Naive thymus-derived CD4-positive, alpha-beta T cell (primary cell): ENCODE measurements at regions of chr4 and their contacts with region 1.

Region 1: GRCh38 chr4:83083925-83084475 is 30.5 kb downstream of the PLAC8 start:
- DNase-seq: peak; percentile 36 to 86 (median 77)
- ATAC-seq: peak; percentile 98
- H3K4me3 ChIP-seq: no peak overlapping the region
- H3K4me3 Mint-ChIP-seq: peak overlapping the region; percentile 43 to 74 (median 62)
- H3K27ac ChIP-seq: peak overlapping the region; percentile 70
- H3K27ac Mint-ChIP-seq: peak overlapping the region; percentile 88 to 99 (median 94)
- H3K4me1 ChIP-seq: peaks cover 12 to 29% of the 10 kb centered on the region in 2 donors
- H3K4me1 Mint-ChIP-seq: peaks cover 25 to 55% (median 43%) of the 10 kb centered on the region in 7 donors
- H3K27me3 ChIP-seq: no peaks in the 10 kb centered on the region
- H3K27me3 Mint-ChIP-seq: no peaks in the 10 kb centered on the region

Region 2: GRCh38 chr4:83259586-83259985 is 175.6 kb after region 1 on chr4:
- CTCF ChIA-PET with region 1: interaction called, 17 read pairs
- POLR2A ChIA-PET with region 1: interaction called, 3 read pairs
- intact Hi-C with region 1: loop called in 1 of 2 experiments (anchors 1 kb)
- DNase-seq: no peak
- ATAC-seq: no peak
- H3K4me3 ChIP-seq: no peak overlapping the region
- H3K4me3 Mint-ChIP-seq: no peak overlapping the region
- H3K27ac ChIP-seq: no peak overlapping the region
- H3K27ac Mint-ChIP-seq: no peak overlapping the region
- H3K4me1 ChIP-seq: peaks cover 4 to 5% of the 10 kb centered on the region in 2 donors
- H3K4me1 Mint-ChIP-seq: peaks cover 0 to 19% (median 9%) of the 10 kb centered on the region in 7 donors
- H3K27me3 ChIP-seq: no peaks in the 10 kb centered on the region
- H3K27me3 Mint-ChIP-seq: no peaks in the 10 kb centered on the region

Region 3: GRCh38 chr4:83473423-83473822 is 389.4 kb after region 1 on chr4:
- CTCF ChIA-PET with region 1: no interaction called
- POLR2A ChIA-PET with region 1: no interaction called
- intact Hi-C with region 1: no loop called
- DNase-seq: no peak
- ATAC-seq: no peak
- H3K4me3 ChIP-seq: no peak overlapping the region
- H3K4me3 Mint-ChIP-seq: no peak overlapping the region
- H3K27ac ChIP-seq: no peak overlapping the region
- H3K27ac Mint-ChIP-seq: no peak overlapping the region
- H3K4me1 ChIP-seq: no peaks in the 10 kb centered on the region
- H3K4me1 Mint-ChIP-seq: peaks cover 0 to 20% (median 10%) of the 10 kb centered on the region in 7 donors
- H3K27me3 ChIP-seq: no peaks in the 10 kb centered on the region
- H3K27me3 Mint-ChIP-seq: no peaks in the 10 kb centered on the region